ENCODE measurements at regions of chr16 and their contacts with region 1.

Region 1: DNA sequence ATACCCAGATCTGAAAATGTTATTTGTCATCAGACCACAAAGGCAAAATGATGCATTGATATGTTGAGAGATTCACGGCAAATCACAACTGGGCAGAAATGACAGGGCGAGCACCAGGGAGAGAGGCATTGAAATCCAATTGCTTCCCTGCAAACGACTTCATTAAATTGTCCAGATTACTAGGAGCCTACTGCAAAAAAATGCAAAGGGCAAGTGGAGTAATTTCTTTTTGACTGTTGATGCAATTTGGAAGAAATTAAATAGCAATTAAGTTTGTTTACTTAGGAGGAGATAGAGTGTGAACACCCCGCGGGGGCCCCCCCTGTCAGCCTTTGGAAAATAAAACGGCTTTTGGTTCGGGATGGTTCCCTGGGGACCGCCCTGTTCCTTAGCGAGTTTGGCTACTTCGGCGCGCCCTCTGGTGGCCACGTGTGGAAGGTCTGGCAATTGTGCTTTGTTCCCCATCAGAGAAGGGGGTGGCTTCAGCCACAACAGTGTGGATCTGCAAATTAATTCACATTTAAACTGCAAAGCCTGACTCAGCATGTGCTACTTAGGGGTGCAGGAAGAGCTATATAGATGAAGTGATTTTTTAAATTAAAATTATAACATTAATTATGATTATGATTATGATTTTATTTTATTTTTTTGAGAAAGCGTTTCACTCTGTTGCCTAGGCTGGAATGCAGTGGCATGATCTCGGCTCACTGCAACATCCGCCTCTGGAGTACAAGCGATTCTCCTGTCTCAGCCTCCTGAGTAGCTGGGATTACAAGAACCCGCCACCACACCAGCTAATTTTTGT is 14.5 kb upstream of the TMC7 start:
- DNase-seq: peak; percentile 47 to 85
- H3K4me3 ChIP-seq: no peak overlapping the region
- H3K27ac ChIP-seq: no peak overlapping the region
- H3K4me1 ChIP-seq: no peaks in the 10 kb centered on the region
- H3K27me3 ChIP-seq: no peaks in the 10 kb centered on the region
- CTCF ChIP-seq: peak; percentile 96

Region 2: DNA sequence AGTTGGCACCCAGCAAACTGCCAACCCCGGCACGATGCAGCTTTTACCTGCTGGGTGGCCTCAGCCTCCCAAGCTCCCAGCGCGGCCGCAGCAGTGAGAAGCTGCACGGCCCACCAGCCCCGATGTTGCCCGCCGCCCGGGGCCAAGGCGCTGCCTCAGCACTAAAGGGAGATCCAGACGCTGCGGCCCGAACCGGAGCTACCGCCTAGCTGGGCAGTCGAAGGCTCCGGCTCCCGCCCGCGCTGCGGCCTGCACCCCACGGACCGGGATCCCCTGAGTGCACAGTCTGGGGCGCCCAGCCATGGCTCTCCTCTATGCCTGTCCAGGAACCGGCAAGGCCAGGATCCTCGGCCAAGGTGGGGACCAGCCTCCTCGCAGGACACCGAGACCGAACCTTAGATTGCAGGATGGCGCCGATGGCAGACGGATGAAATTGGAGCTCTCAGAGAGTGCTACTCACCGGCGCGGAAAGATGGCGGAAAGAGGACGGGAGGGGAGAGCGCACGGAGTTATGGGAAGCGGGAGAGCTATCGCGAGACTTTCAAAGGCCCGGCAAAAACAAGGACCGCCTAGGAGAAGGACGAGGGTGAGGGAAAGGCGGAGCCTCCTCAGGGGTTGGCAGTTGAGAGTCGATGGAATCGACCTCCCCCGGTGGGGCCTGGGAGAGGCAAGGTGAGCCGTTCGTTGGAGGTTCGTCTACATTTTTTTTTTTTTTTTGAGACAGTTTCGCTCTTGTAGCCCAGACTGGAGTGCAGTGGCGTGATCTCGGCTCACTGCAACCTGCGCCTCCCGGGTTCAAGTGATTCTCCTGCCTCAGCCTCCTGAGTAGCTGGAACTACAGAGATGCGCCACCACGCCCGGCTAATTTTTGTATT is 179.2 kb before region 1 on chr16 and contains the start of gene RPS15A:
- CTCF ChIA-PET with region 1: interaction called, 16 read pairs
- POLR2A ChIA-PET with region 1: no interaction called
- intact Hi-C with region 1: no loop called
- DNase-seq: peak; percentile 94 to 97
- H3K4me3 ChIP-seq: peak within 1 kb of the TSS; percentile 90
- H3K27ac ChIP-seq: peak within 1 kb of the TSS; percentile 81
- H3K4me1 ChIP-seq: peaks cover 42% of the 10 kb centered on the region
- H3K27me3 ChIP-seq: no peaks in the 10 kb centered on the region
- CTCF ChIP-seq: no peak
- total RNA-seq, gene RPS15A: 1,449 and 1,977 TPM in 2 replicates

Region 3: DNA sequence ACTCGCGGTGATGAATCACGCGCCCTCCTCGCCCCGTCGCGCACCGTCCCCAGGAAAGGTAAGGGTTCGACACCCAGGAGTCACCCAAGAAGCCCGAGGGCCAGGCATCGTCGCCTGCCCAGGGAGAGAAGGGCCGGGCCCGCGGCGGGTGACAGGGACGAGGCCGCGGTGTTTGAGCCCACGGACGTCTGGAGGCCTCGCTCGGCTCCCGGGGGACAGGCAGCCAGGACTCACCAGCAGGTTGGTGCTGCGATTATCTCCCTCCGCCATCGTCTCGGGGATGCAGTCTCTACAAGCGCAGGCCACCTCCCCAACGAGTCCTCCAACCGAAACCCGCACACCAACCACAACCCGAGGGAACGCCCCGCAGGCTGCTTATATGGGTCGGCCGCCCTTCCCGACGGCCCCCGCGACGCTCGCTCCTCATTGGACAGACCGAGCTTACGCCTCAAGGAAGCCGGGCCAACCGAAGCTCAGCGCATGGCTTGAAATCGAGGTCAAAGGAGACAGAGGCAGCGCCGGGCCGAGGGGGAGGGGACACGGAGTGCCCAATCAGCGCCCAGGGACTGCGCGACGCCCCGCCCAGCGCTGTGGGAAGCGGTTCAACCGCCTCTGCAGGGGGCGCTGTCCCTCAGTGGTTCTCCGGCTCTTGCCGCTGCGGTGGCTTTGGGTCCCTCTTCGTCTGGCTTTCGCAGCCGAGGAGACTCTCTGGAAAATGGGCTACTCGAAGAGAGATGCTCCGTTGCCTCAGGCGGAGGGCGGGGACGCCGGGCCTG is 167.9 kb before region 1 on chr16 and contains the start of gene ARL6IP1:
- CTCF ChIA-PET with region 1: no interaction called
- POLR2A ChIA-PET with region 1: no interaction called
- intact Hi-C with region 1: loop called (anchors 5 kb)
- DNase-seq: peak; percentile 98 to 99
- H3K4me3 ChIP-seq: peak within 1 kb of the TSS; percentile 98
- H3K27ac ChIP-seq: peak within 1 kb of the TSS; percentile 85
- H3K4me1 ChIP-seq: peaks cover 48% of the 10 kb centered on the region
- H3K27me3 ChIP-seq: no peaks in the 10 kb centered on the region
- CTCF ChIP-seq: peak; percentile 91
- total RNA-seq, gene ARL6IP1: 294 and 338 TPM in 2 replicates

Region 4: GRCh38 chr16:18932243-18932981 is 36.8 kb before region 1 on chr16:
- CTCF ChIA-PET with region 1: no interaction called
- POLR2A ChIA-PET with region 1: no interaction called
- intact Hi-C with region 1: loop called (anchors 2 kb)
- DNase-seq: no peak
- H3K4me3 ChIP-seq: no peak overlapping the region
- H3K27ac ChIP-seq: no peak overlapping the region
- H3K4me1 ChIP-seq: peaks cover 6% of the 10 kb centered on the region; the same call in 1 of the 2 replicates
- H3K27me3 ChIP-seq: no peaks in the 10 kb centered on the region
- CTCF ChIP-seq: no peak

Region 5: GRCh38 chr16:19005561-19006445 is 36.6 kb after region 1 on chr16:
- CTCF ChIA-PET with region 1: no interaction called
- POLR2A ChIA-PET with region 1: interaction called, 13 read pairs
- intact Hi-C with region 1: no loop called
- DNase-seq: peak; percentile 55 to 76
- H3K4me3 ChIP-seq: no peak overlapping the region
- H3K27ac ChIP-seq: peak overlapping the region; percentile 33; the same call in 1 of the 2 replicates
- H3K4me1 ChIP-seq: peaks cover 11% of the 10 kb centered on the region
- H3K27me3 ChIP-seq: no peaks in the 10 kb centered on the region
- CTCF ChIP-seq: no peak

Measured in PC-9 (cell line).